PC-9 (cell line): ENCODE measurements at regions of chr10 and their contacts with region 1.

Region 1: DNA sequence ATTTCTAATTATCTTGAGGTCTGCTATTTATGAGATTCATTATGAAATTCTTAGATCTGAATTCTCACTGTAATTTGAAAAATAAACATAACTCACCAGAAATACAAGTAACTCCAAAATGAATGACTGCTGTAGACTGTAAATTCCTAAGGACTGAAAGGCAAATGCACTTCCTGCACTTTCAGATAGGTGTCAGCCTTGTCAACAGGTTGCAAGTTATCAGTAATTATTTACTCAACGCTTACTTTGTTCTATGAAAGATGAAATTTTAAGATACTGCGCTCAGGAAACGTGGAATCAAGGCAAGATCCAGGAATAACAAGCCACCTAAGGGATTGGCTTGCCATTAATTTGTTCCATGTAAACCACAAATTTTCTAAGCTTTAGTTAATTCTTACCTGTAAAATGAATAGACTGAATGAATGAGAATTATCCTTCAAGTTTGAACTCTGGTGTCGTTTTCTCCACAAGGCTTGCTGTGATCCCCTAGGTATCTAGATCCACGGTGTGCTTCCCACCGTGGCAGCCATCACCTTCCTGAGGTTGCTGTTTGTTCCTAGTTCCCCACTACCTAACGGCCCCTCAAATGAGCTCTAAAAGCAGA is 12.6 kb downstream of the DHX32 start:
- DNase-seq: peak in 1 of 2 experiments; percentile 9
- H3K4me3 ChIP-seq: no peak overlapping the region
- H3K27ac ChIP-seq: no peak overlapping the region
- H3K4me1 ChIP-seq: no peaks in the 10 kb centered on the region
- H3K27me3 ChIP-seq: no peaks in the 10 kb centered on the region
- CTCF ChIP-seq: peak; percentile 87

Region 2: GRCh38 chr10:126749015-126749655 is 880.7 kb after region 1 on chr10:
- CTCF ChIA-PET with region 1: no interaction called
- POLR2A ChIA-PET with region 1: no interaction called
- intact Hi-C with region 1: loop called (anchors 5 kb)
- DNase-seq: peak; percentile 40 to 63
- H3K4me3 ChIP-seq: no peak overlapping the region
- H3K27ac ChIP-seq: no peak overlapping the region
- H3K4me1 ChIP-seq: no peaks in the 10 kb centered on the region
- H3K27me3 ChIP-seq: no peaks in the 10 kb centered on the region
- CTCF ChIP-seq: peak; percentile 58